A673 (cell line): ENCODE measurements at regions of chr22 and their contacts with region 1.

Region 1: DNA sequence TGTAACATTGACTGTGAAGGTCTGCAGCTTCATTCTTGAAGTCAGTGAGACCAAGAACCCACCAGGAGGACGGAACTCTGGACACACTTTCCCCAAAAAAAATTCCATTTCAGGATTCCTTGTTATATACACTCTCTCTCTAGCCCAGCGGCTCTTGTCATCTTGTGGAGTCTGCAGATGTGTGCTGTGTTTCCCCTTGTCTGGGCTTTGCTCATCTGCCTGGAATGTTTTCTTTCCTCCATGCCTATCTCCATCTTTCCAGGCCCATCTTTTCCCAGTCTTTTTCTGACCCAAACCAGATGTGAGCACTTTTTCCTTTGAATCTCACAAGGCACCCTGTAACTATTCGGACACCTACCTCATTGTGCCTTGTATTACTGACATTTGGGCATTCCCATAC is 5.1 kb upstream of the DRG1 start:
- DNase-seq: no peak
- H3K4me3 ChIP-seq: no peak overlapping the region
- H3K27ac ChIP-seq: no peak overlapping the region
- H3K4me1 ChIP-seq: no peaks in the 10 kb centered on the region
- H3K27me3 ChIP-seq: no peaks in the 10 kb centered on the region
- CTCF ChIP-seq: no peak

Region 2: GRCh38 chr22:29480512-29481264 is 1913.6 kb before region 1 on chr22:
- CTCF ChIA-PET with region 1: no interaction called
- POLR2A ChIA-PET with region 1: no interaction called
- intact Hi-C with region 1: no loop called
- DNase-seq: peak; percentile 67
- H3K4me3 ChIP-seq: peak overlapping the region; percentile 39
- H3K27ac ChIP-seq: no peak overlapping the region
- H3K4me1 ChIP-seq: peaks cover 9% of the 10 kb centered on the region
- H3K27me3 ChIP-seq: peaks cover 33% of the 10 kb centered on the region
- CTCF ChIP-seq: 0 out of 2 replicates have a peak, but pooled peaks have one; percentile 15

Region 3: DNA sequence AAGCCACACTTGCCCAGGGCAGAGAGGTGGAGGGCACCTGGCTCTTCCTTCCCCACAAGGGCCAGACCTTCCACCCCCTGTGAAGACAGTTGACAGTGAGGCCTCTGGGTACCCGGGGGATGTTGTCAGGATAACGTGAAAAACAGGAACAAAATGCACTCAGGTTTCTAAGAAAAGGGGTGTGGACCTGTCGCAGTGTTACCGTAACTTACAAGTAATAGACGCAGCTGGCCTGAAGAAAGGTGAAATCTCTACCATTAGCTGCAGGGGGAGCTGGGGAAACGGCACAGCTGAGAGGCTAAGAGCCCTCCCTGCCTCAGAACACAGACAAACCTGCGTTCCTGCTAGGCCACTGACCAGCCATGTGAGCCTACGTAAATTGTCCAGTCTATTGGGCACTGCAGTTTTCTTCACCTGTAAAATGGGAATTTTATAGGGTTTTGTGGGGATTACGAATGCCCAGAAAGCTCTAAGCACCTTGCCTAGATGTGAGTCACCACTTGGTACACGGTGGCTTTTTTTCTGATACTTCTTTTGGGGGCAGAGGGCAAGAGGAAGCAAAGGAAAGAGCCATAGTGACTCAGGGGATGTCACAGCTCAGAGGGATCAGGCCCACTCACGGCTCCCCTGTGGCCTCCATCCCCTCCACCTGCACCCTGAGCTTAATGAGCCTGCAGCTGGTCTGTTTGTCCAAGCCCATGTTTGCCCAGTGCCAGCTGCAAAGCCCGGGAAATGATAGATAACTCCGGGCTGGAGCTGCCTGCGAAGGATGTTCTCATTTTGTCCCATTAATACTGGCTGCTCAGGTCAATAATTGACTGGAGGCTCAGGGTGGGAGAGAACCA is 1692.9 kb before region 1 on chr22:
- CTCF ChIA-PET with region 1: no interaction called
- POLR2A ChIA-PET with region 1: no interaction called
- intact Hi-C with region 1: no loop called
- DNase-seq: no peak
- H3K4me3 ChIP-seq: no peak overlapping the region
- H3K27ac ChIP-seq: no peak overlapping the region
- H3K4me1 ChIP-seq: peaks cover 25% of the 10 kb centered on the region
- H3K27me3 ChIP-seq: no peaks in the 10 kb centered on the region
- CTCF ChIP-seq: 0 out of 2 replicates have a peak, but pooled peaks have one; percentile 16

Region 4: DNA sequence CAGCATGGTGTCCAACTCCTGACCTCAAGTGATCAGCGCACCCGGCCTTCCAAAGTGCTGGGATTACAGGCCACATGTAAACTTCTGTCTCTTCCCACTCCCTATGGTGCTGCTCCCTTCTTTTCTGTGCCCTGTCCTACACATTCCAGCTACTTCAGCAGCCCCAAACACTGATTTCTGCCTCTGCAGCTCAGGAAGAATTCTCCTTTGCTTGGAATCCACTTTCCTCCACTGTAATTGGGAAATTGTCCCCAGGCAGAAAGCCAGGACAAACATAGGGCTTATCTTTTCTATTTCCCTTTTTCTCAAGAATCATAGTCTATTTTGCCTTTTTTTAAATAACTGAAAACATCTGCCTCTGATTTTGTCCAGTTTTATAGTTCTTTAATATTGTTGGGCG is 16.2 kb before region 1 on chr22:
- CTCF ChIA-PET with region 1: no interaction called
- POLR2A ChIA-PET with region 1: interaction called, 10 read pairs
- intact Hi-C with region 1: no loop called
- DNase-seq: no peak
- H3K4me3 ChIP-seq: no peak overlapping the region
- H3K27ac ChIP-seq: no peak overlapping the region
- H3K4me1 ChIP-seq: no peaks in the 10 kb centered on the region
- H3K27me3 ChIP-seq: no peaks in the 10 kb centered on the region
- CTCF ChIP-seq: no peak